ENCODE measurements at regions of chr17 and their contacts with region 1.

Region 1: GRCh38 chr17:21119247-21119918 is 7.4 kb upstream of the DHRS7B start:
- DNase-seq: no peak
- ATAC-seq: peak; percentile 85
- H3K4me3 ChIP-seq: no peak overlapping the region
- H3K27ac ChIP-seq: no peak overlapping the region
- H3K4me1 ChIP-seq: no peaks in the 10 kb centered on the region
- H3K27me3 ChIP-seq: no peaks in the 10 kb centered on the region; a peak in 1 of 4 replicates
- CTCF ChIP-seq: peak; percentile 91 to 96 (median 93)
- EP300 ChIP-seq: no peak
- POLR2A ChIP-seq: no peak
- RAD21 ChIP-seq: peak; percentile 91

Region 2: DNA sequence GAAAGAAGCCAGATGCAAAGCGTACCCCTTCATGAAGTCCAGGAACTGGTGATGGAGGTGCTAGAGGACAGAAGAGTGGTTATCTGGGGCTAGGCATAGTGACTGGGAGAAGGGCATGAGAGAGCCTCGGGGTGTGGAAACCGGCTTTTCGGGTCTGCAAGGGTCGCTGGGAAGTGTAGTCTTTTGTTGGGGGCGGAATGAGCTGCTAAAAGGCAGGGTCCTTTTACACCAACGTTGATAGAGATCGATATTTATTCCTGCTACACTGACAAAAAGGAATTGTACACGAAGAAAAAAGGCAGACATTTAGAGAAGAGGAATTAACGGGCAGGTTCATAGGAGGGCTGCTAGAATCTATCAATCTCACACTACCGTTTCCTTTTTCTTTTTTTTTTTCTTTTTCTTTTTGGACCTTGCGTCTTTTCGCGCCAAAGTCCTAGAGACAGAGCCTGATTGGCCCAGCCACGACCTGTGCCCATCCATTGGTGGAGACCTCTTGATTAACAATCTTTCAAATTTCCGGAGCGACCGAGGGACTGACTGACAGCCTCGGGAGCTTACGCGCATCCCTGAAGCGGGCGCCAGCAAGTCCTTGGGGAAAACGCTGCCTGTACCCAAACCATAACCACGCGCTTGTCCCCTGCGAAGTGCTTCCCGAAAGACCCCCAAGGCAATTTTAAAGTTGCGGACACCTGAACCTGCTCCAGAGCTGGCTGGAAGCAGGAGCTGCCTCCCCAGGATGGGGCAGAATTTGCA is 20.3 kb before region 1 on chr17:
- CTCF ChIA-PET with region 1: interaction called, 14 read pairs
- POLR2A ChIA-PET with region 1: no interaction called
- RAD21 ChIA-PET with region 1: no interaction called
- SMC1A ChIA-PET with region 1: no interaction called
- in situ Hi-C with region 1: no loop called
- intact Hi-C with region 1: no loop called
- DNase-seq: peak; percentile 65
- ATAC-seq: peak; percentile 99
- H3K4me3 ChIP-seq: peak overlapping the region; percentile 95
- H3K27ac ChIP-seq: peak overlapping the region; percentile 97
- H3K4me1 ChIP-seq: no peaks in the 10 kb centered on the region; the same call in 1 of the 2 replicates
- H3K27me3 ChIP-seq: no peaks in the 10 kb centered on the region
- CTCF ChIP-seq: no peak
- EP300 ChIP-seq: no peak
- POLR2A ChIP-seq: peak; percentile 48; the same call in 1 of the 2 replicates
- RAD21 ChIP-seq: no peak

Region 3: DNA sequence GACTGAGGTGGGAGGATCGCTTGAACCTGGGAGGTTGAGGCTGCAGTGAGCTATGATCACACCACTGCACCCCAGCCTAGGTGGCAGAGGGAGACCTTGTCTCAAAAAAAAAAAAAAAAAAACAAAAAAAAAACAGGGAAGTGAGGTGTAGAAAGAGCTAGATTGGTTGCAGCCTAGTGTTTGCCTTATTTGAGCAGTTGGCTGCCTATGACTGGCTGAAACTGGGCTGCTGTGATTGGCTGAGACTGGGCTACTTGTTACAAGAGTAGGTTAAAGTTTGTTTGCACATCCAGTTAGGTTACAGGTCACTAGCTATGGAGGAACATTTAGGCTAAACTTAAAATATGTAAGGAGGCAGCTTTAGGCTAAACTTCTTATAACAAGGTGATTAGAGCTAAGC is 13.0 kb after region 1 on chr17:
- CTCF ChIA-PET with region 1: interaction called, 28 read pairs
- POLR2A ChIA-PET with region 1: interaction called, 6 read pairs
- RAD21 ChIA-PET with region 1: interaction called, 9 read pairs
- SMC1A ChIA-PET with region 1: interaction called, 5 read pairs
- in situ Hi-C with region 1: no loop called
- intact Hi-C with region 1: no loop called
- DNase-seq: no peak
- ATAC-seq: peak; percentile 85
- H3K4me3 ChIP-seq: no peak overlapping the region
- H3K27ac ChIP-seq: no peak overlapping the region
- H3K4me1 ChIP-seq: no peaks in the 10 kb centered on the region; the same call in 1 of the 2 replicates
- H3K27me3 ChIP-seq: no peaks in the 10 kb centered on the region
- CTCF ChIP-seq: no peak
- EP300 ChIP-seq: no peak
- POLR2A ChIP-seq: no peak
- RAD21 ChIP-seq: no peak

Region 4: GRCh38 chr17:21214015-21214776 is 94.8 kb after region 1 on chr17 and contains the start of gene TMEM11:
- CTCF ChIA-PET with region 1: interaction called, 6 read pairs
- POLR2A ChIA-PET with region 1: no interaction called
- RAD21 ChIA-PET with region 1: no interaction called
- SMC1A ChIA-PET with region 1: interaction called, 17 read pairs
- in situ Hi-C with region 1: no loop called
- intact Hi-C with region 1: no loop called
- DNase-seq: peak; percentile 71
- ATAC-seq: peak; percentile 95
- H3K4me3 ChIP-seq: peak within 1 kb of the TSS; percentile 81
- H3K27ac ChIP-seq: peak within 1 kb of the TSS; percentile 90
- H3K4me1 ChIP-seq: peaks cover 9% of the 10 kb centered on the region; the same call in 1 of the 2 replicates
- H3K27me3 ChIP-seq: no peaks in the 10 kb centered on the region
- CTCF ChIP-seq: no peak
- EP300 ChIP-seq: no peak
- POLR2A ChIP-seq: peak; percentile 88
- RAD21 ChIP-seq: no peak
- polyA plus RNA-seq, gene TMEM11: 16.3 to 18.4 TPM

Region 5: DNA sequence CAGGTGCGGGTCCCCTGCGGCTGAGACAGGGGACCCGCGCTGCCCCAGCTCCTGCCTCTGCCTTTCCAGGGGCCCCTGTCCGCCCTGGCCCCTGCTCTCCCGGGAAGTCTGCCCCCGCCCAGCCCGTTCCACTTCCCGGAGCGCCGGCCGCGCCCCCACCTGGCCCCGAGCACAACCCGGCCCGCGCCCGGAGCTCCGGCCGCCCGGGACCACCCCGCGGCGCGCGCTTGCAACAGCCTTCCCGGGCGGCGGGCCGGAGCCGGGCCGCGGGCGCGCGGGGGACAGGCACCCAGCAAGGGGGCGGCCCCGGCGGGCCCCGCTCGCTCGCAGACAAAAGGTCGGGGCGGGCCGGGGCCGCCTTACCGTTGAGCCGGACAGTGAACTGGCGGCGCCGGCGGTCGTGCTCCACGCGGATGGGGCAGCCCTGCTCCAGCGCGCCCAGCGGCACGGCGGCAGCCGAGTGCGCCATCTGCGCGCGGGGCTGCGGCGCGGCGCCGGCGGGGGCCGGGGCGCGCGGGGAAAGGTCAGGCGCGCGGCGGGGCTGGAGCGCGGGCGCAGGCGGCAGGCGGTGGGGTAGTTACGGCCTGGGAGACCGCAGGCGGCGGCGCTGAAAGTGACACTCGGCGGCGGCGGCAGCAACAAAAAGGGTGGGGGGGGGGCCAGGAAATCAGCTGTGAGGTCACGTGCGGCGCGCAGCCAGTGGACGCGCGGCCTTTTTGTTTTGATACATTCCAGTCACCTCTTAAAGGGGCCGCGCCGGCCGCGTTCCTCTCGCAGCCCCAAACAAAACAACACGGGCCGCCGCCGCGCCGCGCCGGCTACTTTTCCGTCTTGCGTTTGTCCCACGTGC is 133.6 kb after region 1 on chr17 and contains the start of gene NATD1:
- CTCF ChIA-PET with region 1: no interaction called
- POLR2A ChIA-PET with region 1: no interaction called
- RAD21 ChIA-PET with region 1: no interaction called
- SMC1A ChIA-PET with region 1: no interaction called
- in situ Hi-C with region 1: no loop called
- intact Hi-C with region 1: no loop called
- DNase-seq: no peak
- ATAC-seq: peak; percentile 74
- H3K4me3 ChIP-seq: peak within 1 kb of the TSS; percentile 70
- H3K27ac ChIP-seq: no peak within 1 kb of the TSS
- H3K4me1 ChIP-seq: peaks cover 4% of the 10 kb centered on the region
- H3K27me3 ChIP-seq: peaks cover 2 to 5% of the 10 kb centered on the region in 2 experiments; a peak in 3 of 4 replicates
- CTCF ChIP-seq: no peak
- EP300 ChIP-seq: no peak
- POLR2A ChIP-seq: peak; percentile 56
- RAD21 ChIP-seq: no peak
- polyA plus RNA-seq, gene NATD1: 0.02 TPM

Region 6: DNA sequence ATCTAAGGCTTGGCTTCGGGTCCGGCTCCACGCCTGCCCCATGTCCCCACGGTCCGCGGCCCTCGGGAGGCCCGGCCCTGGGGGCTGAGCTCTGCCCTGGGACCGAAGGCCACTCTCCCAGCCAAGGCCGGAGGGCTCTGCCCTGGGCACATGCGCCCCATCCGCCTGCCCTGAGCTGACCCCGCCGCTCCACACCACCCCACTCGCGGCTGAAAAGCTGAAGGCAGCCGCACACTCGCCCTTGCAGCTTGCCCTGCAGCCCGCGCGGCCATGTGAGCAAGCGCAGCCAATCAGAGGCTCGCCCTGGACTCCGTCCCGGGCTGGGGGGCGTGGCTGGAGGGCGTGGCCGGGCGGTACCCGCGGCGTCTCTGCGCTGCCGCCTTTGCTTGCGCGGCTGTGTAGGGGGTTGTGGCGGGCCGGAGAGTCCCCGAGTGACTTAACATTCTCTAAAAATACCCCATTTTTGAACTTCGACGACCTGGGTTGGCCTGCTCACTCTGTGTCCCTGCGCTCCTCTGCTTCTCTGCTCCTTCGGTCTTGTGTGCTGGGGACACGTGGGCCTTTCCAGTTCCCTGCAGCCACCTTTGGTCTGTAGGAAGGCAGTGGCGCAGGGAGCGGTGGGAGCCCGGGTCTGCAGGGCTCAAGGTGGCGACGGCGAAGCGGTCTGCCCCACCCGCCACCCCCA is 156.3 kb after region 1 on chr17:
- CTCF ChIA-PET with region 1: interaction called, 32 read pairs
- POLR2A ChIA-PET with region 1: no interaction called
- RAD21 ChIA-PET with region 1: interaction called, 10 read pairs
- SMC1A ChIA-PET with region 1: interaction called, 7 read pairs
- in situ Hi-C with region 1: loop called (anchors 5 kb)
- intact Hi-C with region 1: no loop called
- DNase-seq: peak; percentile 43
- ATAC-seq: peak; percentile 97
- H3K4me3 ChIP-seq: peak overlapping the region; percentile 72
- H3K27ac ChIP-seq: no peak overlapping the region
- H3K4me1 ChIP-seq: peaks cover 10% of the 10 kb centered on the region
- H3K27me3 ChIP-seq: peaks cover 0 to 5% of the 10 kb centered on the region in 2 experiments; a peak in 3 of 4 replicates
- CTCF ChIP-seq: no peak
- EP300 ChIP-seq: no peak
- POLR2A ChIP-seq: peak; percentile 81
- RAD21 ChIP-seq: no peak

Region 7: DNA sequence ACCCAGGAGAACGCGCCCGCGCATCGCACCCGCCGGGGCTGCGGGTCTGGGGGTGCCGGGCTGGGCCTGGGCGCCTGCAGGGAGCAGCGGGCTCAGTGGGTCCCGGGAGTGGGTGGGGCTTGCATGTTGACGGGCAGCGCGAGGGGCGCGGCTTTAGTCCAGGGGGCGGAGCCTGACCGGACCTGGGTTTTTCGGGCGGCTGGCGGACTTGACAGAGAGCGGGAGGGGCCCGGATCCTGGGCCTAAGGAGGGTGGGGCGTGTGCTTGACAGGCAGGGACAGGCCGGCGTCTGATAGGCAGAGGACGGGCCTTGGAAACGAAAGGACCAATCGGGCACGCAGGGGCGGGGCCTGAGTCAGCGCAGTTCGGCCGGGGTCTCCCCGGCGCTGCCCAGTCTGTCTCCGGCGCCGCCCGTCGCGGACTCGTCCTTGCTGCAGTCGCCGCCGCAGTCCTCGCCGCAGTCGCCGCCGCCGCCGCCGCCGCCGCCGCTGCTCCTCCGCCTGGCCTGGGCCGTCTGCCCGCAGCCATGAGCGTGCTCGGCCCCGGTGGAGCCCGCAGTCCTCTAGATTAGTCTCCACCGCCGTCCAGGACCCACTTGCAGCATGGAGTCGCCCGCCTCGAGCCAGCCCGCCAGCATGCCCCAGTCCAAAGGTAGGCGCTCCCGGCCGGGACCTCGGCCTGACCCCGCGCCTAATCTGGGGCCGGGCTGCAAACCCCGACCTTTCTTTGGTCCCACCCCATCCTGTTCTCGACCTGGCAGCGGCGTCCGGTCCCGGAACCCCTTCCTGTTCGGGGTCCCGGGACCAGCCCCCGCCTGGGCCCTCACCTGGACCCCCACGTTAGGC is 165.2 kb after region 1 on chr17 and contains the start of gene MAP2K3:
- CTCF ChIA-PET with region 1: interaction called, 32 read pairs
- POLR2A ChIA-PET with region 1: no interaction called
- RAD21 ChIA-PET with region 1: interaction called, 7 read pairs
- SMC1A ChIA-PET with region 1: interaction called, 7 read pairs
- in situ Hi-C with region 1: loop called (anchors 5 kb)
- intact Hi-C with region 1: no loop called
- DNase-seq: peak; percentile 88
- ATAC-seq: peak; percentile 80
- H3K4me3 ChIP-seq: peak within 1 kb of the TSS; percentile 94
- H3K27ac ChIP-seq: peak within 1 kb of the TSS; percentile 68
- H3K4me1 ChIP-seq: peaks cover 31% of the 10 kb centered on the region
- H3K27me3 ChIP-seq: 0 out of 4 replicates have a peak, but pooled peaks cover 0 to 3% of the 10 kb centered on the region in 2 experiments
- CTCF ChIP-seq: no peak
- EP300 ChIP-seq: no peak
- POLR2A ChIP-seq: peak; percentile 86
- RAD21 ChIP-seq: no peak
- polyA plus RNA-seq, gene MAP2K3: 0.71 to 3.8 TPM

Region 8: GRCh38 chr17:21330436-21331160 is 211.2 kb after region 1 on chr17:
- CTCF ChIA-PET with region 1: no interaction called
- POLR2A ChIA-PET with region 1: no interaction called
- RAD21 ChIA-PET with region 1: no interaction called
- SMC1A ChIA-PET with region 1: no interaction called
- in situ Hi-C with region 1: no loop called
- intact Hi-C with region 1: no loop called
- DNase-seq: no peak
- ATAC-seq: no peak
- H3K4me3 ChIP-seq: no peak overlapping the region
- H3K27ac ChIP-seq: no peak overlapping the region
- H3K4me1 ChIP-seq: no peaks in the 10 kb centered on the region
- H3K27me3 ChIP-seq: no peaks in the 10 kb centered on the region
- CTCF ChIP-seq: no peak
- EP300 ChIP-seq: no peak
- POLR2A ChIP-seq: no peak
- RAD21 ChIP-seq: no peak

Region 9: DNA sequence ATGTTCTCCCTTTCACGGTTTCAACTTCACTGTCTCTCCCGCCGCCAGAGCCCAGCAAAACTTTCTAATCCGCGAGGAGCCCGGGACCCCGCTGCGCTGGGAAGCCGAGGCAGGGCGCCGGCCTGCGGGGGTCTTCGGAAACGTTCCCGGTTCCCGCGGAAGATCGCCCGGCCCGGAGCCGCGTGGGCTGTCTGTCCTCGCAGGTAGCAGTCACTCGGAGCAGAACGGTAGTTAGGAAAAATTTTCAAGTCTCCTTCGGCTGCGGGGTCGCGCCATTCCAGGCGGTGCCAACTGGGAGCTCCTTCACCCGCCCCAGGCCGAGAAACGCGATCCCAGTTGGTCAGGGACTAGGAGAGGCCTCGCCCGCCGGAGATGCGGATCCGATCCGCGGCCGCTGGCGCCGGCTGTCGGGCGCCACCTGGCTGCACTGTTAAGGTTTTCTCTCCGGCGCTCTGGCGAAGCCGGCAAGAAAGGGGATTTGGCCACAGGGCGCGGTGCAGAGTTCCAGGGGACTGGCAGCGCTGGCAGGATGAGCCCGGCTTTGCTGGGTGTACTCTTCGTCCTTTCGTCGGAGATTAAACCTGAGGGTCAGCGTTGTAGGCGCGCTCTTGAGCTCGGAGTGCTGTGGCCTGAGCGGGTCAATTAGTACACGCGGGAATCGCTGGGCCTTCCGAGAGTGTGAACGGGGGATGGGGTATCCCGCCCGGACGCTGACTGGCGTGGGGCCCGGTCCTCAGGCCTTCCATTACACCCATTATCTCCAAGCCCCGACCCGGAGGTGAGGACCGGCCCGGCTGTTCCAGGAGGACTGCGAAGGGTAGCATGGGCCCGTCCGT is 392.2 kb after region 1 on chr17:
- CTCF ChIA-PET with region 1: interaction called, 47 read pairs
- POLR2A ChIA-PET with region 1: no interaction called
- RAD21 ChIA-PET with region 1: interaction called, 4 read pairs
- SMC1A ChIA-PET with region 1: interaction called, 7 read pairs
- in situ Hi-C with region 1: loop called (anchors 5 kb)
- intact Hi-C with region 1: no loop called
- DNase-seq: no peak
- ATAC-seq: peak; percentile 95
- H3K4me3 ChIP-seq: no peak overlapping the region
- H3K27ac ChIP-seq: no peak overlapping the region
- H3K4me1 ChIP-seq: no peaks in the 10 kb centered on the region
- H3K27me3 ChIP-seq: peaks cover 3 to 11% of the 10 kb centered on the region in 2 experiments
- CTCF ChIP-seq: peak; percentile 54 to 72 (median 59)
- EP300 ChIP-seq: no peak
- POLR2A ChIP-seq: no peak
- RAD21 ChIP-seq: peak; percentile 56